ENCODE measurements at regions of chr17 and their contacts with region 1.

Region 1: GRCh38 chr17:50094753-50095619 is at the start of gene PDK2:
- DNase-seq: peak; percentile 97 to 98
- ATAC-seq: peak; percentile 89 to 94 (median 90)
- H3K4me3 ChIP-seq: peak within 1 kb of the TSS; percentile 95
- H3K27ac ChIP-seq: peak within 1 kb of the TSS; percentile 88
- H3K4me1 ChIP-seq: peaks cover 47% of the 10 kb centered on the region
- H3K27me3 ChIP-seq: no peaks in the 10 kb centered on the region
- CTCF ChIP-seq: no peak
- total RNA-seq, gene PDK2: 79.3 to 213 (median 110) TPM

Region 2: GRCh38 chr17:50055426-50056230 is 39.4 kb before region 1 on chr17 and contains the start of gene ITGA3:
- intact Hi-C with region 1: loop called in 1 of 2 experiments (anchors 5 kb)
- DNase-seq: peak; percentile 76 to 82
- ATAC-seq: peak; percentile 61 to 71 (median 66)
- H3K4me3 ChIP-seq: peak within 1 kb of the TSS; percentile 76
- H3K27ac ChIP-seq: peak within 1 kb of the TSS; percentile 87
- H3K4me1 ChIP-seq: peaks cover 47% of the 10 kb centered on the region
- H3K27me3 ChIP-seq: no peaks in the 10 kb centered on the region
- CTCF ChIP-seq: no peak
- total RNA-seq, gene ITGA3: 7.8 to 21.9 (median 15.0) TPM

Region 3: GRCh38 chr17:50129728-50130558 is 35.0 kb after region 1 on chr17 and contains the start of gene SAMD14:
- intact Hi-C with region 1: no loop called
- DNase-seq: peak in 1 of 2 donors; percentile 76
- ATAC-seq: peak; percentile 26 to 58 (median 46)
- H3K4me3 ChIP-seq: peak within 1 kb of the TSS; percentile 69
- H3K27ac ChIP-seq: peak within 1 kb of the TSS; percentile 82
- H3K4me1 ChIP-seq: peaks cover 34% of the 10 kb centered on the region
- H3K27me3 ChIP-seq: no peaks in the 10 kb centered on the region
- CTCF ChIP-seq: no peak
- total RNA-seq, gene SAMD14: 0.55 to 2.7 (median 1.3) TPM

Region 4: DNA sequence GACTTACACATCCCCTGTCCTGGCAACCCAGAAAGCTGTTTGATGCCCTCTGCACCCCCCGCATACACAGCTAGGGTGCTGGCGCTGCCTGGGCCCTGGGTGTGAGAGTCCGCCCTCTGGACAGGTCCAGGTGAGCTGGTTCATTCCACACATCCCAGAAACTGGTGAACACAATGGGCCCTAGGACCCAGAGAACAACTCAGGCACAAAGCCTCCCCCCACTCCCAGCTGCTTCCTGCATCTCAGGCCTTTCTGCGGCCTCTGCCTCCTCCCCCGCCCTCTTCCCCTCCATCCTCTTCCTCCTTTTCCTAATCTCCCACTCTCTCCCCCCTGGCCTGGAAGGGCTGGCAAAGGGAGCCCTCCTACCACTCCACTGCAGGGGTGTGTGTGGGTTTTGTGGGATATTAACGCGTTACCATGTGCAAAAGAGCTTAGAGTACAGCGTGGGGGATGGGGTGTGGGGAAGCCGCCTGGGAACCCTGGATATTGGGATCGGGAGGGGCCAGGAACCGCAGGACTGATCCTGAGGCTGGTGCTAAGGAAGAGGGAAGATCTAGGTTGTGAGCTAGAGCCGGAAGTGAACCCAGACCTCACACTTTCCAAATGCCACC is 57.1 kb after region 1 on chr17:
- intact Hi-C with region 1: loop called in 1 of 2 experiments (anchors 2 kb)
- DNase-seq: peak; percentile 82 to 86
- ATAC-seq: peak; percentile 53 to 73 (median 66)
- H3K4me3 ChIP-seq: peak overlapping the region; percentile 84
- H3K27ac ChIP-seq: peak overlapping the region; percentile 83
- H3K4me1 ChIP-seq: peaks cover 60% of the 10 kb centered on the region
- H3K27me3 ChIP-seq: no peaks in the 10 kb centered on the region
- CTCF ChIP-seq: no peak

Region 5: DNA sequence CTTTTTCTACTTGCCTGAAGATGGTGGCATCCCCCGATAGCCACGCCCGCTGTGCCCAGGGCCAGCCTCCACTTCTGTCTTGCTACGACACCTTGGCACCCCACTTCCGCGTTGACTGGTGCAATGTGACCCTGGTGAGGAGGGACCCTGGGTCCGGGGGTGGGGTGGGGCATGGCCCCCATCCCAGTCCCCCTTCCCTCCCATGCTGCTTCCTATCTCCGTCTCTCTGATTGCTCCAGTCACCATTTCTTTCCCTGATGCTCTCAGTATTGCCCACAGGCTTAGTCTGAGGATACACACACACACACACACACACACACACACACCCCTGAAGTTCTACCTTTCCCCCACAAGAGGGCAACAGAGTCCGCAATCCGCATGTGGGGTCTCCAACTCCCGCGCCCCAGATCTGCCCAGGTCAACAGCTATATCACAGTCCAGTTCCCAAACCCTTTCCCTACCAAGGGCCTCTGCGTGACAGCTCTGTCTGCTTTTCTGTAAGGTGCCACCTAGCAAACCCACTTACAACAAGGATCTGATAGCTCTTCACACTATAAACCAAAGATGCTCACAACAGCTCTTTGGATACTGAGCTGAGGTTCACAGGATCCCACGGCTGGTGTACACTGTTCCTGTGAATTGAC is 74.3 kb after region 1 on chr17:
- intact Hi-C with region 1: loop called in 1 of 2 experiments (anchors 5 kb)
- DNase-seq: peak; percentile 41 to 71
- ATAC-seq: peak in 2 of 4 donors; percentile 10
- H3K4me3 ChIP-seq: peak overlapping the region; percentile 71
- H3K27ac ChIP-seq: peak overlapping the region; percentile 80
- H3K4me1 ChIP-seq: peaks cover 64% of the 10 kb centered on the region
- H3K27me3 ChIP-seq: no peaks in the 10 kb centered on the region
- CTCF ChIP-seq: peak; percentile 33

Region 6: DNA sequence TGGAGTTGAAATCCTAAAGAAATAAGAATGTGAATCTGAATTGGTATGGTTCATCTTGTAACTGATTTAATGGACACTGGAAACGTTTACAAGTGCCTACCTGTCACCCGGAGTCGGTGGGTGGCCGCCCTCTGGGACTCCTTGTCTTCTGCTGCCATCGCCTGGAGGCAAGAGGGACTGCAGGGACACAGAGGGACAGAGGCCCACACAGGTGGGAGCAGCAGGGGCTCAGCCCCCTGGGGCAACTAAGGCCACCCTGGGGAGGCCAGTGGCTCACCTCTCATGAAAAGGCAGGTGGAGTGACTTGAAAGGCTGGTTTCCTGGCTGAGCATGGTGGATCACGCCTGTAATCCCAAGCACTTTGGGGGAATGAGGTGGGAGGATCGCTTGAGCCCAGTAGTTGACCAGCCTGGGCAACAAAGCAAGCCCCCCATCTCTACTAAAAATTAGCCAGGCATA is 202.4 kb after region 1 on chr17:
- intact Hi-C with region 1: loop called in 1 of 2 experiments (anchors 5 kb)
- DNase-seq: peak; percentile 77 to 85
- ATAC-seq: peak; percentile 89 to 97 (median 96)
- H3K4me3 ChIP-seq: no peak overlapping the region
- H3K27ac ChIP-seq: no peak overlapping the region
- H3K4me1 ChIP-seq: no peaks in the 10 kb centered on the region
- H3K27me3 ChIP-seq: no peaks in the 10 kb centered on the region
- CTCF ChIP-seq: peak; percentile 94

Measured in psoas muscle (tissue), 8 donors.